B cell (primary cell): ENCODE measurements at regions of chr1 and their contacts with region 1.

Region 1: GRCh38 chr1:234373064-234373958 is at the start of gene COA6:
- DNase-seq: peak; percentile 99
- ATAC-seq: peak; percentile 85
- H3K4me3 ChIP-seq: peak within 1 kb of the TSS; percentile 60 to 96 (median 86)
- H3K4me3 Mint-ChIP-seq: peak within 1 kb of the TSS; percentile 100
- H3K27ac ChIP-seq: peak within 1 kb of the TSS; percentile 91 to 96
- H3K27ac Mint-ChIP-seq: peak within 1 kb of the TSS; percentile 100
- H3K4me1 ChIP-seq: peaks cover 13 to 16% of the 10 kb centered on the region in 2 donors
- H3K4me1 Mint-ChIP-seq: peaks cover 33% of the 10 kb centered on the region
- H3K27me3 ChIP-seq: no peaks in the 10 kb centered on the region
- H3K27me3 Mint-ChIP-seq: no peaks in the 10 kb centered on the region
- CTCF ChIP-seq: no peak
- total RNA-seq, gene COA6: 12.5 and 14.8 TPM in 2 replicates

Region 2: DNA sequence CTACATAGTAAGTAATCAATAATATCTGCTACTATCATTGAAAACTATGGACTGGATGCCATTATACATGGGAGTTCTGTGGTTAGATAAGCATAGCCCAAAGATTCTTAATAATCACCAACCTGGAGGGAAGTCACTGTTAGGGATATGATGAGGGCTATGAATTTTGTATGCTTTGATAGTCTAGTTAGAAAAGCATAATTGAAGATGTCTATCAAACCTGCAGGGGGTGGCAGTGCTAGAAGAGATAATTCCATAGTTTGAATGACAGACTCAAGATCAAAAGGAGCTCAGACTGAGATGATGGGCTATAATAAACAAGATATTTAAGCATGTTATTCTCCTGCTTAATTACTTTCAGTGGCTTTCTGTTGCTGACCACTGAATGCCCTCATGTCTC is 15.5 kb before region 1 on chr1:
- CTCF ChIA-PET with region 1: no interaction called
- POLR2A ChIA-PET with region 1: interaction called, 5 read pairs
- intact Hi-C with region 1: loop called (anchors 1 kb)
- DNase-seq: no peak
- ATAC-seq: no peak
- H3K4me3 ChIP-seq: no peak overlapping the region
- H3K4me3 Mint-ChIP-seq: peak overlapping the region; percentile 1
- H3K27ac ChIP-seq: no peak overlapping the region
- H3K27ac Mint-ChIP-seq: no peak overlapping the region
- H3K4me1 ChIP-seq: peaks cover 0 to 4% of the 10 kb centered on the region in 2 donors
- H3K4me1 Mint-ChIP-seq: no peaks in the 10 kb centered on the region
- H3K27me3 ChIP-seq: no peaks in the 10 kb centered on the region
- H3K27me3 Mint-ChIP-seq: peaks cover 12% of the 10 kb centered on the region
- CTCF ChIP-seq: no peak

Region 3: GRCh38 chr1:234478481-234479309 is 105.4 kb after region 1 on chr1 and contains the start of gene TARBP1:
- CTCF ChIA-PET with region 1: no interaction called
- POLR2A ChIA-PET with region 1: interaction called, 6 read pairs
- intact Hi-C with region 1: loop called (anchors 1 kb)
- DNase-seq: peak; percentile 93
- ATAC-seq: peak; percentile 68
- H3K4me3 ChIP-seq: peak within 1 kb of the TSS; percentile 46 to 76 (median 68)
- H3K4me3 Mint-ChIP-seq: peak within 1 kb of the TSS; percentile 87
- H3K27ac ChIP-seq: peak within 1 kb of the TSS; percentile 49 to 69
- H3K27ac Mint-ChIP-seq: peak within 1 kb of the TSS; percentile 89
- H3K4me1 ChIP-seq: peaks cover 30 to 36% of the 10 kb centered on the region in 2 donors
- H3K4me1 Mint-ChIP-seq: peaks cover 38% of the 10 kb centered on the region
- H3K27me3 ChIP-seq: no peaks in the 10 kb centered on the region
- H3K27me3 Mint-ChIP-seq: peaks cover 6% of the 10 kb centered on the region
- CTCF ChIP-seq: no peak
- total RNA-seq, gene TARBP1: 35.4 and 36.0 TPM in 2 replicates

Region 4: GRCh38 chr1:235160957-235161684 is 787.8 kb after region 1 on chr1 and contains the start of gene RBM34:
- CTCF ChIA-PET with region 1: no interaction called
- POLR2A ChIA-PET with region 1: interaction called, 5 read pairs
- intact Hi-C with region 1: loop called (anchors 5 kb)
- DNase-seq: peak; percentile 95
- ATAC-seq: peak; percentile 92
- H3K4me3 ChIP-seq: peak within 1 kb of the TSS; percentile 67 to 97 (median 78)
- H3K4me3 Mint-ChIP-seq: peak within 1 kb of the TSS; percentile 97
- H3K27ac ChIP-seq: peak within 1 kb of the TSS; percentile 89 to 92
- H3K27ac Mint-ChIP-seq: peak within 1 kb of the TSS; percentile 99
- H3K4me1 ChIP-seq: peaks cover 12 to 21% of the 10 kb centered on the region in 2 donors
- H3K4me1 Mint-ChIP-seq: peaks cover 20% of the 10 kb centered on the region
- H3K27me3 ChIP-seq: no peaks in the 10 kb centered on the region
- H3K27me3 Mint-ChIP-seq: no peaks in the 10 kb centered on the region
- CTCF ChIP-seq: peak; percentile 25
- total RNA-seq, gene RBM34: 131 and 137 TPM in 2 replicates